Right ventricle myocardium inferior (tissue), 1 donor: ENCODE measurements at regions of chr5 and their contacts with region 1.

Region 1: DNA sequence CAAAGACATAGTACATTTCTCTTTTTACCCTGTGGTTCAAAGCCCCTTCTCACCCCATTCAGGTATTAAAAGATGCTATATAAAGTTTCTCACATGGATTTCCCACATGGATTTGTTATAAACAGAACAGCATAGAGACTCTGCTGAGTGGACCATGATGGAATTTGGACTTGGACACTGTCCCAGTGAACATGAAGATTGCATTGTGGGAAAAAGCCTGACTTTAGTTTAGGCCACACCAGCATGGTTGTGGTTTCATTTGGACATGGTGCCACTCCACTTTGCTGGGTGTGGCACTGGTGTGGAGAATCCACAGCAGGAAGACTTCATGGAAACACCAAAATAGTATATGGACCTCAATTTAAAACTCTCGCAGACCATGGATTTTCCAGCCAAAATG is 124.6 kb downstream of the ARHGAP26 start:
- DNase-seq: no peak
- ATAC-seq: peak; percentile 35

Region 2: GRCh38 chr5:142446131-142446959 is 448.4 kb before region 1 on chr5:
- intact Hi-C with region 1: no loop called
- DNase-seq: no peak
- ATAC-seq: peak; percentile 67

Region 3: DNA sequence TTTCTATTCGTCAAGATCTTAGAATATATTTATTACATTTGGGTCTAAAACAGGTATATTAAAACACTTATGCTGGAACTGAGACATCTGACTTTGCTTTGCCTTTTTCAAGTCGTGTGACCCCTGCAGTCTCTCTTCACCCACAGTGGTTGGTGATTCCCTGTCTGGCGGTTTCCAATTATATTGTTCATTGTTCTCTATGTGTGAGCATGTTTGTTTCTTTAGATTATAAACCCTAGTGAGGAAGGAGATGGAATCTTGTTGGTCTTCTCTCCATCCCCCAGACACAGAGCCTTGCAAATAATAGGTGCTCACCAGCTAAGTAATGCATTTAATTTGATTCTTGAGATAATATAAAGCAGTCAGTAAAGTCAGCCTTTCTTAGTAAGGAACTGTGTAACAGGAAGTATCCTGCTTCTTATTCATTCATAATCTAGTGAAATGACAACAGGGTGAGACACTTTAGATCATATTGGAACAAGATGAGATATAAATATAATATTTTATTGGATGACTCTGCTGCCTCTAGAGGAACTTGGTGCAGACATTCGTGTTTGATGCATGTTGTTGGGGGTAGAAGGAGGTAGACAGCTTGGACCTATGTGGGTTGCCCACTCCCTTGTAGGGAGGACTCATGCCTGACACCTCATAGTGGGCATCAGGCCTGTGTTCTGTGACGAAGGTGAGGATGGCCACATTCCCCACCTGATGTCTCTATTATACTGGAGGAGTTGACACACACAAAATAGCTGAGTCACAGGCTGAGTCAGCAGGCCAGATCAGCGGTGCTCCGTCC is 297.0 kb before region 1 on chr5:
- intact Hi-C with region 1: loop called (anchors 10 kb)
- DNase-seq: no peak
- ATAC-seq: no peak